ENCODE measurements at regions of chr12 and their contacts with region 1.

Region 1: GRCh38 chr12:88993651-88994050 is 358.6 kb downstream of the DUSP6 start:
- DNase-seq: no peak
- ATAC-seq: peak in 1 of 4 donors; percentile 67
- H3K4me3 ChIP-seq: no peak overlapping the region
- H3K27ac ChIP-seq: no peak overlapping the region
- H3K4me1 ChIP-seq: no peaks in the 10 kb centered on the region
- H3K27me3 ChIP-seq: no peaks in the 10 kb centered on the region
- CTCF ChIP-seq: peak; percentile 72

Region 2: GRCh38 chr12:88111074-88111652 is 882.5 kb before region 1 on chr12:
- intact Hi-C with region 1: loop called in 1 of 2 experiments (anchors 10 kb)
- DNase-seq: no peak
- ATAC-seq: no peak
- H3K4me3 ChIP-seq: no peak overlapping the region
- H3K27ac ChIP-seq: no peak overlapping the region
- H3K4me1 ChIP-seq: no peaks in the 10 kb centered on the region
- H3K27me3 ChIP-seq: no peaks in the 10 kb centered on the region
- CTCF ChIP-seq: peak; percentile 44

Region 3: DNA sequence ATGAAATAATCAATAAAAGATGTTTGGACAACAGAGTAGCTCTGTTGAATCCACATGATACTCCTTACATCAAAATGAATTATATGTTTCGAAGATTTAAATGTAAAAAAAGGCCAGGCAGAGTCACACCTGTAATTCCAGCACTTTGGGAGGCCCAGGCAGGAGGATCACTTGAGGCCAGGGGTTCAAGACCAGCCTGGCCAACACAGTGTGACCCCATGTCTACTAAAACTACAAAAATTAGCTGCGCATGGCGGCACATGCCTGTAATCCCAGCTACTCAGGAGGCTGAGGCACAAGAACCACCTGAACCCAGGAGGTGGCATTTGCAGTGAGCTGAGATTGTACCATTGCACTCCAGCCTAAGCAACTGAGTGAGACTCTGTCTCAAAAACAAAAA is 866.6 kb before region 1 on chr12:
- intact Hi-C with region 1: no loop called
- DNase-seq: no peak
- ATAC-seq: no peak
- H3K4me3 ChIP-seq: no peak overlapping the region
- H3K27ac ChIP-seq: no peak overlapping the region
- H3K4me1 ChIP-seq: no peaks in the 10 kb centered on the region
- H3K27me3 ChIP-seq: no peaks in the 10 kb centered on the region
- CTCF ChIP-seq: no peak

Region 4: DNA sequence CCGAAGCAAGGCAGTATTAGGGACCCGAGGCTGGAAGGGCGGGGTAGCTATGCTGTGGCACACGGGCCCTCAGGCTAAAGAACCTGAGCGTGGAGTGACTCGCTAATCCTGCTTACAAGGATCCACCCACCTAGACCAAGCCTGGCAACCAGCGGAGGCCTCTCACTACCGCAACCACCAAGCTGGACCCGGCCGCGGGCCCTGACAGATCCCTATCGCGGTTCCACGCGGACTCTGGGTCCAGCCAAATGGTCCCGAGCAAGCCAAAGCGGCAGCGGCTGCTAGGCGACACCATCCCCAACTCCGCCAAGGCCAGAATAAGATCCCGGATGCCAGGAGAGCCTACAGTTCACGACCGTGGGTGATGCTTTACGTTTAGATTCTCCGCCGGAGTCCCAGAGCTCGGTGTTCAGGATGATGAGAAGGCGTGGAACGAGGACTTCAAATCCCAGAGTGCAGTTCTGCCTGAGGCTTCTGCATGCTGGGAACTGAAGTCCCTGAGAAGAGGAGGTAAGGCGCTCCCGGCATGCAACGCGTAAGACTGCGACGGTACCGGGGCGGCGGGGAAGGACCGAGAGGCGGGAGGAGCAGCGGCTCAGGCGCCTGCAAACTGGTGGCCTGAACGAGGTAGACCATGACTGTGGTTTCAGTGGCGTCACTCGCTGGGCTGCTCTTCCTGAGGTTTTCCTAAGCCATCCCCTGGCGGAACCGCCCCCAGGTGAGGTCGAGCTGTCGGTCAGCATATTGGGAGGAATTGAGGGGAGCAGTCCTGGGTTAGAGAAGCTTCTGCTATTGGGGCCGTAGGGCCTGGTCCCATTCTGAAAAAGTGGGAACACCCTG is 851.7 kb before region 1 on chr12 and contains the starts of genes CEP290 and TMTC3:
- intact Hi-C with region 1: loop called in 1 of 2 experiments (anchors 10 kb)
- DNase-seq: peak; percentile 91 to 95
- ATAC-seq: peak; percentile 98 to 99 (median 98)
- H3K4me3 ChIP-seq: peak within 1 kb of the TSS; percentile 88
- H3K27ac ChIP-seq: peak within 1 kb of the TSS; percentile 78
- H3K4me1 ChIP-seq: peaks cover 13% of the 10 kb centered on the region
- H3K27me3 ChIP-seq: no peaks in the 10 kb centered on the region
- CTCF ChIP-seq: no peak
- total RNA-seq, gene CEP290: 3.2 to 7.2 (median 5.0) TPM
- total RNA-seq, gene TMTC3: 5.5 to 8.5 (median 7.0) TPM

Region 5: GRCh38 chr12:88580051-88580871 is 413.4 kb before region 1 on chr12 and contains the start of gene KITLG:
- intact Hi-C with region 1: loop called (anchors 1 to 10 kb)
- DNase-seq: peak; percentile 82 to 88
- ATAC-seq: peak; percentile 91 to 95 (median 94)
- H3K4me3 ChIP-seq: peak within 1 kb of the TSS; percentile 87
- H3K27ac ChIP-seq: peak within 1 kb of the TSS; percentile 72
- H3K4me1 ChIP-seq: peaks cover 4% of the 10 kb centered on the region
- H3K27me3 ChIP-seq: no peaks in the 10 kb centered on the region
- CTCF ChIP-seq: peak; percentile 26
- total RNA-seq, gene KITLG: 4.1 to 11.5 (median 8.1) TPM

Region 6: DNA sequence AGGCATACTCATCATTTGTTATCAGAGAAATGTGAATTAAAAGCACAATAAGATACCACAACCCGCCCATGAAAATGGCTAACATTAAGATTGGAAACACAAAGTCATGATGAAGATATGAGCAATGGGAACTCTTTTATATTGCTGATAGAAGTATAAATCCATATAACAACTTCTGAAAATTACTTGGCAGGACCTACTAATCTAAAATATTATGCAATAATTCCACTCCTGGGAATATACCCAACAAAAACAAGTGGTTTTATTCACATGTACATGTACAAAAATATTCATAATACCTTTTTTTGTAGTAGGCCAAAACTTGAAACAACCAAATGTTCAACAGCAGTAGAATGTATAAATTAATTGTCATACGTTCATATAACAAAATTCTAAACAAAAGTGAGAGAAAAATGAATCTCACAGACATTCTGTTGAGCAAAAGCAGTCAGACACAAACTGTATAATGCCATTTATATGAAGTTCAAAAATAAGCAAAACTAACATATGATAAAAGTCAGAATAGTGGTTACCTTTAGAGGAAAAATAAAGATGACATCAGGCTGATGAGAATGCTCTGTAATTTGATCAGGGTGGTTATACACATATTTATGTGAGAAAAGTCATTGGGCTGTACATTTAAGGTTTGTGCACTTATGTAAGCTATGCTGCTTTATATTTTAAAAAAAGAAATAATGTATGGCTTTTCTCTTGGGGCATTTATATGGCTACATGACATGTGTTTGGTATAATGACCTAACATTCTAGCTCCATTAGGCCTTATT is 104.1 kb before region 1 on chr12:
- intact Hi-C with region 1: loop called (anchors 5 to 10 kb)
- DNase-seq: no peak
- ATAC-seq: no peak
- H3K4me3 ChIP-seq: no peak overlapping the region
- H3K27ac ChIP-seq: no peak overlapping the region
- H3K4me1 ChIP-seq: peaks cover 13% of the 10 kb centered on the region
- H3K27me3 ChIP-seq: no peaks in the 10 kb centered on the region
- CTCF ChIP-seq: no peak

Region 7: DNA sequence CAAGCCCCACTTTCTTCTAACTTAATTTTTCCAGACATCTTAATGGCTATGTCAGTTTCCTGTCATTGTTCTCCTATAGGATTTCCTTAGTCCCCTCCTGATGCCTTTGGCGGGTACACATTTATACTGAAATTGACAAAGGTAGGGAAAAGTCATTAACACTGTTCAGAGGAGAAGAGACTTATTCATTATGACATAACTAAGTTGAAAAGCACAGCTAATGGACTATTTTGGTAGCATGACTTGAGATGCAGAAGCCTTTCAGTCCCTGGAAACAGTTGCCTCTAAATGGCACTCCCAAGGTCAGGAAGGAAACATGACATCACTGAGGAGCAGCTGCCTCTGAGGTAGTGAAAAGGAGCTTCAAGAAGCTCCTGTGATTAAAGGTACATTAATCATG is 95.9 kb before region 1 on chr12:
- intact Hi-C with region 1: loop called (anchors 5 to 10 kb)
- DNase-seq: no peak
- ATAC-seq: peak; percentile 91 to 98 (median 94)
- H3K4me3 ChIP-seq: no peak overlapping the region
- H3K27ac ChIP-seq: peak overlapping the region; percentile 76
- H3K4me1 ChIP-seq: peaks cover 19% of the 10 kb centered on the region
- H3K27me3 ChIP-seq: no peaks in the 10 kb centered on the region
- CTCF ChIP-seq: no peak

Measured in psoas muscle (tissue), 8 donors.